Natural killer cell (primary cell): ENCODE measurements at regions of chr15 and their contacts with region 1.

Region 1: DNA sequence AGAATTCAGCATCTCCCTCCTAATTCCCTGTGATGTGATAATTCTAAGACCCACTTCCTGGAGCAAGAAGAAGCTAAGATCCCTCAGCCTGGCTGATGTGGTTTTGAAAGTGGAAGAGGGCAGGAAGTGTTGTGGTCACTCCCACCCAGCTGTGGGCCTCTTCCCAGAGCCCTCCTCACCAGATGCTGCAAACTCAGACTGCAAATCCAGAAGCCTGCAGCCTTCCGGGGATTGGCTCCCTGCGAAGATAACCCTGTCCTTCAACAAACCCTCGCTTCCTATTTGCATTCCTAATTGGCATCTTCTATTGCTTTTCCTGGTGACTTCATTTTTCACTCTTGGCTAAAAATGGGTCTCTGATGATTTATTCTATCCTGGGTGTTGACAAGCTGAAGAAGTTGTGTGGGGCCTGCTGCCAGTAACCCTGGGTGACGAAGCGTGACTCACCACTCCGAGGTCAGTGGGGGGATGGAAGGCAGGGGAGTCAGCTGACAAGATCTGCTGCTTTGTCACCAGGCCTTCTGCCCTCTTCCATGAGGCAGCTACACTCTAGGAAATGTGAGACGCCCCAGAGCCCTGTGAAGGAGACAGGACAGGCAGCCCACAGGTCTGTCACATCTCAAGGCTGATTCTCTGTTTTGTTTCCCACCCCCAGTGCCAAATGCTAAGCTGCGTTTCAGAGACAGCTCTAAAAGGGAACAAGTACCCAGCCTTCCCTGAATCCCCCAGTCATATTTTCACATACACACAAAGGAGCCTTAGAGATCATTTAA is 99.7 kb upstream of the LIPC start:
- DNase-seq: peak; percentile 79 to 87
- ATAC-seq: peak; percentile 92 to 99 (median 98)
- H3K4me3 ChIP-seq: no peak overlapping the region
- H3K4me3 Mint-ChIP-seq: peak overlapping the region; percentile 76
- H3K27ac ChIP-seq: peak overlapping the region; percentile 82
- H3K27ac Mint-ChIP-seq: peak overlapping the region; percentile 92 to 95
- H3K4me1 ChIP-seq: peaks cover 29% of the 10 kb centered on the region
- H3K4me1 Mint-ChIP-seq: peaks cover 34 to 40% of the 10 kb centered on the region in 2 donors
- H3K27me3 ChIP-seq: no peaks in the 10 kb centered on the region
- H3K27me3 Mint-ChIP-seq: no peaks in the 10 kb centered on the region
- CTCF ChIP-seq: no peak

Region 2: GRCh38 chr15:58269455-58270414 is 62.4 kb before region 1 on chr15:
- intact Hi-C with region 1: no loop called
- DNase-seq: peak in 1 of 2 donors; percentile 68
- ATAC-seq: peak; percentile 80 to 97 (median 91)
- H3K4me3 ChIP-seq: no peak overlapping the region
- H3K4me3 Mint-ChIP-seq: no peak overlapping the region
- H3K27ac ChIP-seq: no peak overlapping the region
- H3K27ac Mint-ChIP-seq: peak overlapping the region; percentile 50 to 75
- H3K4me1 ChIP-seq: peaks cover 8% of the 10 kb centered on the region
- H3K4me1 Mint-ChIP-seq: peaks cover 11 to 13% of the 10 kb centered on the region in 2 donors
- H3K27me3 ChIP-seq: no peaks in the 10 kb centered on the region
- H3K27me3 Mint-ChIP-seq: peaks cover 2 to 8% of the 10 kb centered on the region in 2 donors
- CTCF ChIP-seq: peak; percentile 76

Region 3: DNA sequence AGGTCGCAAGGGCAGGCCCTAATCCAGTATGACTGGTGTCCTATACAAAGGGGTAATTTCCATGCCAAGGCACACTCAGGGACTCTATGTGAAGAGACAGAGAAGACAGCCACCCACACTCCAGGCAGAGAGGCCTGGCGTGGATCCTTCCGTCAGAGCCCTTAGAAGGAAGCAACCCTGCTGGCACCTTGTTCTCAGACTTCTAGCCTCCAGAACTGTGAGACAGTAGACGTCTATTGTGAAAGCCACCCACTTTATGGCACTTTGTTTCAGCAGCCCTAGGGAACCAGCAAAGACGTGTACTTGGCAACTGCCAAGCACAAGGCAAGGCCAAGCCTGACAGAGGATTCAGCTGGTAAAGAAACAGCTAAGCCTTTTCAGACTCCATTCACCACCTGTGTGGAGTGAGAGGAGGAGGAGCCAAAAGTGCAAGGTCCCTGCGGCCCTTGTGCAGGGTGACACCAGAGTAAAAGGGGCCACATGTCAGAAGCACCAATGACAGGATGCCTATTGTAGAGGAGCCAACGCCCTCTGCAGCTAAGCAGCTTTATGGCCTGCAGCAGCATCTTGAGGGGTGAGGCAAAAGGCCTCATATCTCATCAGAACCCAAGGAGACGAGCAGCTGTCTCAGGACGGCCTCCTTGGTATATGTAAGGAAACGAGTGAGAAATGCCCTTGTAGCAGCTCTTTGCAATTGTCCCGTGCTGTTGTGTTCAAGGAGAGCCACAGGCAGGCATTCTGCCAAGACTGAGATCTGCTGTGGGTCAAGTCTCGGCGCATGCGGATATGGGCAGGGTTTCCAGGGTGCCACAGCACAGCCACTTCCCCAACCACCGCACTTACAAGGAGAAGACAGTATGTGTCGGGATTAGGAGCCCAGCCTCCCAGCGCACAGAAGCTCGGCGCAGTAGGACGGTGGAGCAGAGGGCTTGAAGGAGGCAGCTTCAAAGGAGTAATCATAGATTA is 21.8 kb before region 1 on chr15:
- intact Hi-C with region 1: loop called (anchors 2 kb)
- DNase-seq: no peak
- ATAC-seq: no peak
- H3K4me3 ChIP-seq: no peak overlapping the region
- H3K4me3 Mint-ChIP-seq: no peak overlapping the region
- H3K27ac ChIP-seq: no peak overlapping the region
- H3K27ac Mint-ChIP-seq: no peak overlapping the region
- H3K4me1 ChIP-seq: peaks cover 23% of the 10 kb centered on the region
- H3K4me1 Mint-ChIP-seq: peaks cover 35 to 50% of the 10 kb centered on the region in 2 donors
- H3K27me3 ChIP-seq: no peaks in the 10 kb centered on the region
- H3K27me3 Mint-ChIP-seq: no peaks in the 10 kb centered on the region
- CTCF ChIP-seq: no peak

Region 4: DNA sequence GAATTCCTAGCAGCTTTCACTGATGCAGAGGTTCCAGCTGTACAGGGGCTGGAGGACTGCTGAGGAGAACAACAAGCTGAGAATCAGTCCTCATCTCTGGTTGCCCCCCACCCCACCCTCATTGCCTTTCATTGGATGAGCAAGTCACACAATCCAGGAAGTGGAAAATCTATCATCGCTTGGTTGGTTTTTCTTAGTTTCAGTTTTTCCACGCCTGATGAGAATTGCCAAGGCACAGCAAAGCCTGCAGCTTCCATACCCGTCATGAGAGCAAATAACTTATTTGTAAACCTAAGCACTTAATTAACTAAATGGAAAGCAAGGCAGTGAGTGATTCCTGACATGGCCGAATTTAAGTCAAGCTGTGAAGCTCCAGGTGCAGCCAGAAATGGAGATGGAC is 78.3 kb after region 1 on chr15:
- intact Hi-C with region 1: loop called (anchors 10 kb)
- DNase-seq: peak; percentile 22 to 64
- ATAC-seq: peak; percentile 71 to 91 (median 87)
- H3K4me3 ChIP-seq: peak overlapping the region; percentile 48
- H3K4me3 Mint-ChIP-seq: peak overlapping the region; percentile 99
- H3K27ac ChIP-seq: peak overlapping the region; percentile 48
- H3K27ac Mint-ChIP-seq: peak overlapping the region; percentile 95
- H3K4me1 ChIP-seq: peaks cover 4% of the 10 kb centered on the region
- H3K4me1 Mint-ChIP-seq: peaks cover 28 to 34% of the 10 kb centered on the region in 2 donors
- H3K27me3 ChIP-seq: no peaks in the 10 kb centered on the region
- H3K27me3 Mint-ChIP-seq: no peaks in the 10 kb centered on the region
- CTCF ChIP-seq: no peak

Region 5: GRCh38 chr15:58469432-58470353 is 137.6 kb after region 1 on chr15:
- intact Hi-C with region 1: loop called (anchors 5 kb)
- DNase-seq: no peak
- ATAC-seq: no peak
- H3K4me3 ChIP-seq: no peak overlapping the region
- H3K4me3 Mint-ChIP-seq: no peak overlapping the region
- H3K27ac ChIP-seq: no peak overlapping the region
- H3K27ac Mint-ChIP-seq: peak overlapping the region in 1 of 2 donors; percentile 47
- H3K4me1 ChIP-seq: peaks cover 35% of the 10 kb centered on the region
- H3K4me1 Mint-ChIP-seq: peaks cover 35 to 43% of the 10 kb centered on the region in 2 donors
- H3K27me3 ChIP-seq: no peaks in the 10 kb centered on the region
- H3K27me3 Mint-ChIP-seq: no peaks in the 10 kb centered on the region
- CTCF ChIP-seq: no peak